Activated T-helper 1 cell treated with anti-CD3 and anti-CD28 coated beads, Interleukin-12 subunit alpha, Interleukin-12 subunit beta, Interleukin-2, Interleukin-4 antibody, amounts not matched to agents 30 ng/mL and 10 ng/mL and 1 ng/mL, durations not matched to agents 14 hours and 24 hours and 36 hours (primary cell): ENCODE measurements at regions of chr9 and their contacts with region 1.

Region 1: DNA sequence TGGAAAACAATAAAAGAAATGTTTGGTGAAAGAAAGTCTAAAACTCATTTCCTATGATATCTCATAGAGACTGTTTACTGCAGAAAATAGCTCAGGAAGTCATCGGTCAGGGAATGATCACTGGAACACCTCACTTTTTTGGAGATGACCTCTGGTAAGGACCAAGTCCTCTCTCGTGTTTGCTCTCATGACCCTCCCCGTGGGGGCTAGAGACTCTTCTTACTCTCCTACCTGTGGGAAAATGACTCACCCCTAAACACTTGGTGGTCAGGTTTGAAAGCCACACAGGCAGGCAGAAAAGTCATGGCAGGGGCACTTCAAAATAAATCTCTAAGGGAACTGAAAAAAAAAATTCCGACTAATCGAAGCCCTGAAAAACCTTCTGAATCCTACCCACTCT is 48.2 kb downstream of the FAM240B start:
- DNase-seq: no peak
- H3K4me3 Mint-ChIP-seq: no peak overlapping the region
- H3K27ac Mint-ChIP-seq: no peak overlapping the region
- H3K4me1 Mint-ChIP-seq: no peaks in the 10 kb centered on the region
- H3K27me3 Mint-ChIP-seq: no peaks in the 10 kb centered on the region

Region 2: DNA sequence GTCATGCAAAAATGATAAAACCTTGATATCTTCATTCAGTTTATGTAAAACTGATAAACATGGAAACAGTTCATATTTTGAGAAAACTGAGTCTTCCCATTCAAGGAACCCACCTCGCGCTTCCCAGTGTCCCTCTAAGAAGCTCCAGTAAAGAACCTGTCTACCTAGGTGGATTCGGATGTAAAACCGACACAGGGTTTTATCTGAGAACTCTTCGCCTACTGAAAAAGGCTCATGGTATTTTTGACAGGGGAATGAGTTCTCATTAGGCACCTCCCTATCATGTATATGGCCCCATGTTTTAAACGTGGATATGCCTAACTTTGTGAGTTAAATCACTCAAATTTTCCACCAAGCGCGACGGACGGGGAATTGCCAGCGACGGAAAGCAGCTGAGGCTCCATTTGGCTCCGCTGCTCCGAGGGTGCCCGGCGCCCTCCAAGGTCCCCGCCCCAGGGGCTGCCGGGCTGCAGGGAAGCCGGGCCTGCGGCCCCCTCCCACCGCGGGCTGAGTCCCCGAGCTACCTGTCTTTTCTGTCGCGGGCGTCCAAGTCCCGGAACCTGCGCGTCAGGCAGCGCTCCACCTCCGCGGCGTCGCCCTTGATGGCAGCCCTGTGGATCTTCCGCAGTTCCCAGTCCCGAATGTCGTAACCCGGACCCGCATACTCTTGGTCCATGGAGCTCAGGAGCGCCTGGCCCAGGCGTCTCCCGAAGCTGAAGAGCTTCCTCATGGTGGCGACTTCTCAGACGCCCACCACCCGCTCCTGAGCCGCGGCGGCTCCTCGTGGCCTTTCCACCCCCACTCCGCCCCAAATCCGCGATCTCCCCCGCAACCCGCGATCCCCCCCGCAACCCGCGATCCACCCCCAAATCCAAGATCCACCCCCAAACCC is 51.9 kb before region 1 on chr9:
- intact Hi-C with region 1: loop called (anchors 5 kb)
- DNase-seq: no peak
- H3K4me3 Mint-ChIP-seq: peak overlapping the region; percentile 90
- H3K27ac Mint-ChIP-seq: peak overlapping the region; percentile 91
- H3K4me1 Mint-ChIP-seq: peaks cover 21% of the 10 kb centered on the region
- H3K27me3 Mint-ChIP-seq: peaks cover 43% of the 10 kb centered on the region